Panc1 (cell line): ENCODE measurements at regions of chr6 and their contacts with region 1.

Region 1: DNA sequence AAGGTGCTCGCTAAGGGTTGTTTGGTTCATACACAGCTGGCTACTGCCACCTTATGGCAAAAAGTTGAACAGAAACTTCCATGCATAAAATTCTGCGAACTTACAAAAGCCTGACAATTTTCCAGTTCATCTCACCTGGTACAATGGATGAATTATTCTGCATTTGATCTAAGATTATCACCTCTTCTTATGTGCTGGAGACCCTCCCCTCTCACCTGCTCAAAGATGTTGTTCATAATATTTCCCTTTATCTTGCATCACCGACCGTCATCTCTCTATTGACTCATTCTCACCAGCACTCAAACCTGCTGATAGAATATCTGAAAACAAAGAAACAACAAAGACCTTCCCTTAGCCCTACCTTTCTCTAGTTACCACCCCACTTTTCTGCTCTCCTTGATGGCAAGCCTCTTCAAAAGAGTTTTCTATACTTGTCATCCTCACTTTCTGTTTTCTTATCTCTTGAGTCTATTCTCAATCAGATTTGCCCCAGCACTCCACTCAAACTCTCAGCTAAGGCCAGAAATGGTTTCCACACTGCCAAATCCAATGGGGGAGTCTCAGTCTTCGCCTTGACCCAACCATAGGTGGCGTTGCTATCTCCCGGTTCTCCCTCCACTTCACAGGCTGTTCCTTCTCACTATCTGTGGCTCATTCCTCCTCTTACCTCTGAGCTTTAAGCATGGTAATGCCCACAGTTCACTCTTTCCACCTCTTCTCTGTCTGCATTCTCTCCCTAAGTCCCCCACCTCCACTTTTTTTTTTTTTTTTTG is 25.8 kb downstream of the SNRNP48 start:
- DNase-seq: peak; percentile 51
- ATAC-seq: peak; percentile 80
- H3K4me3 ChIP-seq: no peak overlapping the region
- H3K27ac ChIP-seq: no peak overlapping the region
- H3K4me1 ChIP-seq: no peaks in the 10 kb centered on the region
- H3K27me3 ChIP-seq: no peaks in the 10 kb centered on the region
- CTCF ChIP-seq: peak; percentile 85

Region 2: DNA sequence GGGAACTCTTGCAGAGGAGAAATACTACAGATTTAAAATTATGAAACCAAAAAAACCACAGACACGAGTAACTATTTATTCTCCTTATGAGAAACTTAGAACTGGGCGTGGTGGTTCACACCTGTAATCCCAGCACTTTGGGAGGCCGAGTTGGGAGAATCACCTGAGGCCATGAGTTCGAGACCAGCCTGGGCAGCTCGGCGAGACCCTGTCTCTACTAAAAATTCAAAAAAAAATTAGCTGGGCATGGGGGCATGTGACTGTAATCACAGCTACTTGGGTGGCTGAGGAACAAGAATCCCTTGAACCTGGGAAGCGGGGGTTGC is 339.6 kb before region 1 on chr6:
- CTCF ChIA-PET with region 1: interaction called, 6 read pairs
- POLR2A ChIA-PET with region 1: no interaction called
- in situ Hi-C with region 1: no loop called
- intact Hi-C with region 1: loop called (anchors 2 kb)
- DNase-seq: no peak
- ATAC-seq: no peak
- H3K4me3 ChIP-seq: no peak overlapping the region
- H3K27ac ChIP-seq: no peak overlapping the region
- H3K4me1 ChIP-seq: no peaks in the 10 kb centered on the region
- H3K27me3 ChIP-seq: no peaks in the 10 kb centered on the region
- CTCF ChIP-seq: peak; percentile 73

Region 3: GRCh38 chr6:7292596-7293255 is 323.1 kb before region 1 on chr6:
- CTCF ChIA-PET with region 1: no interaction called
- POLR2A ChIA-PET with region 1: no interaction called
- in situ Hi-C with region 1: no loop called
- intact Hi-C with region 1: loop called (anchors 5 kb)
- DNase-seq: no peak
- ATAC-seq: no peak
- H3K4me3 ChIP-seq: no peak overlapping the region
- H3K27ac ChIP-seq: no peak overlapping the region
- H3K4me1 ChIP-seq: no peaks in the 10 kb centered on the region
- H3K27me3 ChIP-seq: no peaks in the 10 kb centered on the region
- CTCF ChIP-seq: no peak

Region 4: DNA sequence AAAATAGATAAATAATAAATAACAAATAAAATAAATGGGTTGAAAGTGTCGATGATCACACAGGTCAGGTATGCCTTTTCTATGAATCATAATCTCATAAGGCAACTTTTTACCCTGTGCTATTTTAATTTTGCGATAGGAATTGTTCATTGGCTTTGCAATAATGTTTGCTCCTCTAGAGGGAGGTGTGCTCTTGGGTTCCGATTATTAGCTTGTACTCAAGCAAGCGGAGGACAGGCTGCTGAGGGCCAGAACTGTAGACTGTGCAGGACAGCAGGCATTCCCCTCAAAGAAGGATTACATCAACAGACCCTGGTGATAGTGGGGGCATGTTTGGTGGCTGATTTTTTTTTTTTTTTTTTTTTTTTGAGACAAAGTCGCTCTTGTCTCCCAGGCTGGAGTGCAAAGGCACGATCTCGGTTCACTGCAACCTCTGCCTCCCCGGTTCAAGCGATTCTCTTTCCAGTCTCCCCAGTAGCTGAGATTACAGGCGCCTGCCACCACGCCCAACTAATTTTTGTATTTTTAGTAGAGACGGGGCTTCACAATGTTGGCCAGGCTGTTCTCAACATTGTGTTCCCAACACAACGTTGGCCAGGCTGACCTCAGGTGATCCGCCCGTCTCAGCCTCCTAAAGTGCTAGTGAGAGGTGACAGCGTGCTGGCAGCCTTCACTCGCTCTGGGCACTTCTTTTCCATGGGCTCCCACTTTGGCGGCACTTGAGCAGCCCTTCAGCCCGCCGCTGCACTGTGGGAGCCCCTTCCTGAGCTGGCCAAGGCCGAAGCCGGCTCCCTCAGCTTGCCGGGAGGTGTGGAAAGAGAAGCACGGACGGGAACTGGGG is 190.6 kb before region 1 on chr6:
- CTCF ChIA-PET with region 1: no interaction called
- POLR2A ChIA-PET with region 1: no interaction called
- in situ Hi-C with region 1: no loop called
- intact Hi-C with region 1: loop called (anchors 1 kb)
- DNase-seq: peak; percentile 12
- ATAC-seq: peak; percentile 88
- H3K4me3 ChIP-seq: no peak overlapping the region
- H3K27ac ChIP-seq: no peak overlapping the region
- H3K4me1 ChIP-seq: no peaks in the 10 kb centered on the region
- H3K27me3 ChIP-seq: no peaks in the 10 kb centered on the region
- CTCF ChIP-seq: no peak; the same call in 1 of the 2 replicates